Activated CD4-positive, alpha-beta T cell treated with anti-CD3 and anti-CD28 coated beads for 36 hours (primary cell): ENCODE measurements at regions of chr16 and their contacts with region 1.

Region 1: DNA sequence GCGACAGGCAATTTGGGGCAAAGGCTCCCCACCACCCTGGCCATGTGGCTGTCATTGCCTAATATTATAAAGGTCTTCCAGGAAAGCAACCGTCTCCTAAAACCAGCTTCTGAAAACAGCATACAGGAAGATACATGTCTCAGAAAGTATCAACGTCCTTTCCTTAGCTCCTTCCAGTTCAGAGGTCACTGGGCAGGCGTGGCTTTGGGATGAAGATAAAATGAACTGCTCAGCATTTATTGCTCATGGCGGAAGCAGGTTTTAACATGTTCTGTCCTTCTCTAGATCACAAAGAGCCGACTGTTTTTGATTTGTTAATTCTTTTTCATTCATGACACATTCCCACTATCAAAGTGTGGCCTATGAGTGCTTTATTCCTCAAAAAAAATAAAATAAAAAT is 8.0 kb downstream of the CFAP20 start:
- DNase-seq: no peak
- ATAC-seq: no peak
- H3K4me3 Mint-ChIP-seq: no peak overlapping the region
- H3K27ac Mint-ChIP-seq: no peak overlapping the region
- H3K4me1 Mint-ChIP-seq: peaks cover 52% of the 10 kb centered on the region
- H3K27me3 Mint-ChIP-seq: no peaks in the 10 kb centered on the region

Region 2: GRCh38 chr16:57795431-57795878 is 325.7 kb before region 1 on chr16:
- CTCF ChIA-PET with region 1: no interaction called
- POLR2A ChIA-PET with region 1: no interaction called
- intact Hi-C with region 1: no loop called
- DNase-seq: peak; percentile 62
- ATAC-seq: peak; percentile 78
- H3K4me3 Mint-ChIP-seq: no peak overlapping the region
- H3K27ac Mint-ChIP-seq: no peak overlapping the region
- H3K4me1 Mint-ChIP-seq: peaks cover 11% of the 10 kb centered on the region
- H3K27me3 Mint-ChIP-seq: peaks cover 9% of the 10 kb centered on the region

Region 3: DNA sequence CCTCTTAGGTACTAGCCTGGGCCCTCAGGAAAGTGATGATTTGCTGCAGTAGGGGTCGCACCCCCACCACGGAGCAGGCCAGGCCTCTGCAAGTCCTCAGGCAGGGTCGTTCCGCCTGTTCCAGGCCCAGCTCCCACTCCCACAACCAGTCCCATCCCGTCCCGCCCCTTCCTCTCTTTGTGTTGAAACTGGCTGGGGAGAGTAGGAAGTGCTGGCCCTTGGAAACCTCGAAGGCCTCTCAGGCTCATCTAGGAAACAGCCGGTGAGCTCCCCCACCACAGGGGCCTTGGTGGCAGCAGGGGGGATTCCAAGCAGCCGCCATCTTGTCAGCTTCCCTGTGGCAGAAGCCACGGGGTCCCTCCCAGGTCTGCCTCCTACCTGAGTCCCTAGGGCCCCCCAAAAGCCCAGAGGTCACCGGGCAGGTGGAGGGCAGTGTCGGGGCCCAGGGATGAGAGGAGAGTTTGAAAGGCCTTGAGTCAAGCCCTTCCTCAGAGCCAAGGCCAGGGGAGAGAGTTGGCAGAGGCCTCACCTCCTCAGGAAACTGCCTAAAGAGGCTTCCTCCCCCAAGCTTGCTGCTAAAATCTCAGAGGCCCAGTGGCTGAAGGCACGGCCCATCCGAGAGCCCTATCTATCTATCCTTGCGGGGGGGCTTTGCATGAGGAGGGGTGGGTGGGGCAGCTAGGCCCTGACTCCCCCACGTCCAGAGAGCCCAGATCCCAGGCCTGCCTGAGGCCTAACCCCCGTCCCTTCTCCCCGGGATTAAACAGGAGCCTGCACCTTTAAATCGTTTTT is 73.4 kb before region 1 on chr16:
- CTCF ChIA-PET with region 1: no interaction called
- POLR2A ChIA-PET with region 1: no interaction called
- intact Hi-C with region 1: no loop called
- DNase-seq: no peak
- ATAC-seq: no peak
- H3K4me3 Mint-ChIP-seq: no peak overlapping the region
- H3K27ac Mint-ChIP-seq: no peak overlapping the region
- H3K4me1 Mint-ChIP-seq: no peaks in the 10 kb centered on the region
- H3K27me3 Mint-ChIP-seq: no peaks in the 10 kb centered on the region

Region 4: GRCh38 chr16:58098207-58099096 is 22.7 kb before region 1 on chr16:
- CTCF ChIA-PET with region 1: interaction called, 10 read pairs
- POLR2A ChIA-PET with region 1: no interaction called
- intact Hi-C with region 1: no loop called
- DNase-seq: no peak
- ATAC-seq: no peak
- H3K4me3 Mint-ChIP-seq: no peak overlapping the region
- H3K27ac Mint-ChIP-seq: no peak overlapping the region
- H3K4me1 Mint-ChIP-seq: no peaks in the 10 kb centered on the region
- H3K27me3 Mint-ChIP-seq: peaks cover 3% of the 10 kb centered on the region